ENCODE measurements at regions of chr2 and their contacts with region 1.

Region 1: DNA sequence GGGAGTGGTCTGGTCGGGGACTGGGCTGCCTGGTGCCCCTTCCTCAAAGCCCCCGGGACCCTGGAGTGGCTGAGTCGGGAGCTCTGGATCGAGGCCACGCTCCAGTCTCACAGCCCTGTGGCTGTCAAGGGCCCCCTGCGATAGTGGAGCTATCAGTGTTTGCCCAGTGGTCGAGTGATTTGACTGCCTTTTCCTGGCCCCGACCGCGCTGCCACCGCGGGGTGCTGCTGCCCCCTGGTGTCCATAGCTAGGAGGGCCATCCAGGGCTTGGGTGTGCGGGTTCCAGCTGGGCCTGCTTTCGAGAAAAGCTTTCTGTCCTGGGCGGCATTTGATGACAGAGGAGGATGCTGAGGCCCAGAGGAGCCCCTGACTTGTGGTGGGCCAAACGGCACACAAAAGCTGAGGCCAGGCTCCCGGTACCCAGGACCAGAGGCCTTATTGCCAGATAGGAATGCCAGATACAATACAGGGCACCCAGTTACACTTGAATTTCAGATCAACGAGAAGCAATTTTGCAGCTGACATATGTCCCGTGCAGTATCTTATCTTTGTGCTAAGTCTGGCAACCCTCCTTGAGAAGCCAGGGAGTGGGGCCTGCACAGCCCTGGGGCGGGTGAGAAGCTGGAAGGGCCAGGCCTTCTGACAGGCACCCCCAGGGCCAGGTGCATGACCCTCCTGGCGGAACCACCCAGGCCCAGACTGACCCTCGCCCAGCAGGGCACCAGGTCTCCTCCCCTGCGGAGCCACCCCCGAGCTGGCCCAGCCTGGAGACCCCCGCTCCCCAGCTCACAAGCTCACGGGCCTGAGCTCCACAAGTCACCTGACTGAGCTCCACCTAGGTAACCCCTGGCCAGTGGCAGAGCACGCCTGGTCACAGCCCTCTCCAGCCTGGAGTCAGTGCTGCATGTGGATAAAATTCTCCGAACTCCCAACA is 13.0 kb downstream of the ODC1 start:
- DNase-seq: peak; percentile 86 to 90 (median 89)
- H3K4me3 ChIP-seq: no peak overlapping the region
- H3K27ac ChIP-seq: no peak overlapping the region
- H3K4me1 ChIP-seq: peaks cover 0 to 8% (median 2%) of the 10 kb centered on the region in 3 donors
- H3K27me3 ChIP-seq: no peaks in the 10 kb centered on the region
- CTCF ChIP-seq: peak; percentile 95

Region 2: GRCh38 chr2:10072656-10073480 is 362.3 kb before region 1 on chr2:
- intact Hi-C with region 1: loop called (anchors 10 kb)
- DNase-seq: peak; percentile 91 to 95 (median 93)
- H3K4me3 ChIP-seq: peak overlapping the region in 2 of 3 donors; percentile 32 to 40
- H3K27ac ChIP-seq: peak overlapping the region in 1 of 2 donors; percentile 51
- H3K4me1 ChIP-seq: peaks cover 0 to 27% (median 23%) of the 10 kb centered on the region in 3 donors
- H3K27me3 ChIP-seq: no peaks in the 10 kb centered on the region
- CTCF ChIP-seq: peak; percentile 96

Region 3: DNA sequence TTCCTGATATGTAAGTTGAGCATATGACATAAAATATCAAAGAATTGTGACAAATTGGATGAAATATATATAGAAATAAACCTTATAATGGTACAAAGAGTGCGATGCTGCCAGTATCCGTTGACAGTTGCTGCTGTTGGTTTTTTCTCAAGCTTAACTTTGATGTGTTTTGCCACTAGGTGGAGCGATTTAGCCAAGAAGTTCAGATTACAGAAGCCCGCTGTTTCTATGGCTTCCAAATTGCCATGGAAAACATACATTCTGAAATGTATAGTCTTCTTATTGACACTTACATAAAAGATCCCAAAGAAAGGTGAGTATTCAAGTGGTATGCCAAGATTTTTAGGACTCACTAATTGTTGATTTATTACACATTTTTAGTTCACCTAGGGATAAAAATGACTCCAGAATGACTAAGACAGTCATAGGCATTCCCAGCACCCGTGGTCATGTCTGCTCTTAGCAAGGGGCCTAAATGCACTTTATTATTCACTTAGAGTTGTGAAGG is 310.6 kb before region 1 on chr2:
- intact Hi-C with region 1: loop called (anchors 5 kb)
- DNase-seq: peak in 3 of 5 donors; percentile 55 to 92 (median 86)
- H3K4me3 ChIP-seq: no peak overlapping the region
- H3K27ac ChIP-seq: no peak overlapping the region
- H3K4me1 ChIP-seq: peaks cover 3 to 15% (median 4%) of the 10 kb centered on the region in 3 donors
- H3K27me3 ChIP-seq: no peaks in the 10 kb centered on the region
- CTCF ChIP-seq: peak; percentile 60

Measured in kidney (tissue), 22 donors.